Ovary (tissue), 10 donors: ENCODE measurements at regions of chr6 and their contacts with region 1.

Region 1: DNA sequence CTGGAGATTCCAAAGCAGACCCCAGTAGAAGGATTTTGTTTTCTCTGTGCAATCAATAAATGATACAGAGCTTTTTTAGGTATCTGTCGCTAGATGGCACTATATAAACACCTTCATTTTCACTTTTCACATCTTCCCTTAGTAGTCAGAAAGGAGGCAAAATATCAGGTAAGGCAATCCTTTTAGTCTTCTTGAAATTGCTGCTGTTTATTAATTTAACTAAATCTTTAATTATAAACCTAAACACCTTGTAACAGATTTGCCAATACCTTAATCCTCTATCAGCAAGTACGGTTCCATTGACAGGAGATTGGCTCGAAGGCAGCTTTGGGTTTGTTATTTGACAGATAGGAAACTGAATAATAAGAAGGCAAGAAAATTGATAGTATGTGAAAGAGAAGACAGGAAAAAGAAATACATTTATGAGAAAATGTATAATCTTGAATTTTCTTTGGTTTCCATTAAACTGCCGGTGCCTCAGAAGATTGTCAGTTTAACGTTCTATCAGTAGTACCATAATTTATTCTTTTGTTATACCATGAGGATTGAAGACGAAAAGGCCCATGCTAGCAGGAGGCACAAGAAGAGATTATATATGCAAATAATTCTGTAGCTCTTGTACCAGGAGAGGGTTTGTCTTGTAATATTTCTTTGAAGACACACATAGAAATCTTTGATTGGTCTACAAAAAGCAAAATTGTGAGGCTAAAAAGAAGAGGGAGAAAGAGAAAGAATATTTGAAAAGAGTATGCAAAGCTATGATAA is 23.5 kb upstream of the IBTK start:
- DNase-seq: no peak
- H3K4me3 ChIP-seq: no peak overlapping the region
- H3K27ac ChIP-seq: no peak overlapping the region
- H3K4me1 ChIP-seq: no peaks in the 10 kb centered on the region
- H3K27me3 ChIP-seq: no peaks in the 10 kb centered on the region
- CTCF ChIP-seq: no peak
- EP300 ChIP-seq: no peak
- POLR2A ChIP-seq: no peak

Region 2: GRCh38 chr6:82166493-82166892 is 104.6 kb before region 1 on chr6:
- intact Hi-C with region 1: no loop called
- DNase-seq: no peak
- H3K4me3 ChIP-seq: no peak overlapping the region
- H3K27ac ChIP-seq: no peak overlapping the region
- H3K4me1 ChIP-seq: no peaks in the 10 kb centered on the region
- H3K27me3 ChIP-seq: no peaks in the 10 kb centered on the region
- CTCF ChIP-seq: no peak
- EP300 ChIP-seq: no peak
- POLR2A ChIP-seq: no peak

Region 3: DNA sequence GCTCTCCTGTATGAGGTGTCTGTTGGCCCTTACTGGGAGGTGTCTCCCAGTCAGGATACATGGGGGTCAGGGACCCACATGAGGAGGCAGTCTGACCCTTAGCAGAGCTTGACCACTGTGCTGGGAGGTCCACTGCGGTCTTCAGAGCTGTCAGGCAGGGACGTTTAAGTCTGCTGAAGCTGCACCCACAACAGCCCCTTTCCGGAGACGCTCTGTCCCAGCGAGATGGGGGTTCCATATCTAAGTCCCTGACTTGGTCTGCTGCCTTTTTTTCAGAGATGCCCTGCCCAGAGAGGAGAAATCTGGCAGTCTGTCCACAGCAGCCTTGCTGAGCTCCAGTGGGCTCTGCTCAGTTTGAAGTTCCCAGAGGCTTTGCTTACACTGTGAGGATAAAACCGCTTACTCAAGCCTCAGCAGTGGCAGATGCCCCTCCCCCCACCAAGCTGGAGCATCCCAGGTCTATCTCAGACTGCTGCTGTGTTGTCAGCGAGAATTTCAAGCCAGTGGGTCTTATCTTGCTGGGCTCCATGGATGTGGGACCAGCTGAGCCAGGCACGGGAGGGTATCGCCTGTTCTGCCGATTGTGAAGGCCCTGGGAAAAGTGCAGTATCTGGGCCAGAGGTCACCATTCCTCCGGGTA is 12.8 kb after region 1 on chr6:
- intact Hi-C with region 1: loop called in 1 of 4 experiments (anchors 2 kb)
- DNase-seq: no peak
- H3K4me3 ChIP-seq: no peak overlapping the region
- H3K27ac ChIP-seq: no peak overlapping the region
- H3K4me1 ChIP-seq: no peaks in the 10 kb centered on the region
- H3K27me3 ChIP-seq: no peaks in the 10 kb centered on the region
- CTCF ChIP-seq: no peak
- EP300 ChIP-seq: no peak
- POLR2A ChIP-seq: no peak

Region 4: DNA sequence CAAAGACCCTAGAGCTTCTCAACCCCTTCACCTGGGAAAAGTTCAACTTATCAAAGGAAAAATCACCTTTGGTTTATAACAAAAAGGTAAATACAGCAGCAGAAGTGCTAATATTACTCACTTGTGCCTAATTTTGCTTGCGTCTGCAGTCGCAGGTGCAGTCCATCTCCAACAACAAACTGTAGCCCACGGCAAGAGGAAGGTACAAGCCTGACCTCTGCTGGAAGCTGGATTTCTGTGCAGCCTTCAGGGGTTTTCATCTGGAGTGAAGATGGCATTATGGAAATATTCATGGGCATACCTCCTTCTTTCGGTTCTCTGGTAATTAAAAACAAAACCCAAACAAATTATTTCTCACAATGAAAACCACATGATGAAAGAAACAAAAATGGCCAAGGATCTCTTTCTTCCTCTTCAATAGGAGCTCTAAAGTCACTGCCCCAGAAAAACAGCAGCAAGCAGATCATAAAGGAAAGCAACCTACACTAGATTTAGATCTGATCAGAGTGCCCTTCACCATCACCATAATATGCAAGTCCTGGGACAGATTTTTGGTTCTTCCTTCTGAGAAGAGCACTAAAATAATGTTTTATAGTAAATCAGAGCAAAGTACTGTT is 786.8 kb after region 1 on chr6:
- intact Hi-C with region 1: loop called in 3 of 4 experiments (anchors 5 to 10 kb)
- DNase-seq: peak in 1 of 5 donors; percentile 28
- H3K4me3 ChIP-seq: no peak overlapping the region
- H3K27ac ChIP-seq: no peak overlapping the region
- H3K4me1 ChIP-seq: no peaks in the 10 kb centered on the region
- H3K27me3 ChIP-seq: no peaks in the 10 kb centered on the region
- CTCF ChIP-seq: peak in 1 of 3 donors; percentile 14
- EP300 ChIP-seq: no peak
- POLR2A ChIP-seq: no peak